ENCODE measurements at regions of chr1 and their contacts with region 1.

Region 1: DNA sequence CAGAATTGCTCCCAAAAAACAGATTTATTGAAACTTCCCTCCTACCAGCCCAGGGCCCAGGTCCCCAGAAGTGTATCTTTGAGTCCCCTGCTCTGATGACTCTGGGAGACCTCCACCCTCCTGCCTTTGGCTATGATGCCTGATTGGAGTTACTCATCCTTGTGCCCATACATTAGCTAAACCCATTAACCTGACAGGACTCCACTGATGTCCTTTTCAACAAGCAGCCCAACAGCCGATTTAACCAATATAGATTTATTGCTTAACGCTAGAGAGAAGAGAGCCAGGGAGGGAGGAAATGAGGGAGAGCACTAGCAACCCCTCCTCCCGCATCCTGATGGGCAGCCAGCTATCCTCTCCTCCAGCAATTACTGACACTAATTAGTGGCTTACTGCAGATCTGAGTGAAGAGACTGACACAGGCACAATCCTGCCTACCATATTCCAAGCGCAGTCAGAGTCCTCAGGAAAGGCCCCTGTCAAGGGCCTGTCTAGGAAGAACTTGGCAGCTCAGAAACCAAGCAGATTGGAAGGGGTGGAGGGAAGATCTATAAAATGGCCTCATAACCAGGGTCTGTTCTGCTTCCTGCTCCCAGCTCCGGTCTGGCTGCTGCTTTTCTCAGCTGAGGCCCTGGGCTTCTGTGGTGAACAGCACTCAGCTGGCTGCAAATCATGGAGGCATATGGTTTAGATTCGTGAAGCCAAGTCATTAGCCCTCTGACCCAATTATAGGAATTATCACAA is 484.5 kb upstream of the DAB1 start:
- DNase-seq: no peak
- H3K4me3 ChIP-seq: no peak overlapping the region
- H3K27ac ChIP-seq: no peak overlapping the region
- H3K4me1 ChIP-seq: no peaks in the 10 kb centered on the region
- H3K27me3 ChIP-seq: no peaks in the 10 kb centered on the region
- CTCF ChIP-seq: no peak
- POLR2A ChIP-seq: no peak

Region 2: GRCh38 chr1:57319165-57319564 is 589.2 kb before region 1 on chr1:
- intact Hi-C with region 1: no loop called
- DNase-seq: no peak
- H3K4me3 ChIP-seq: no peak overlapping the region
- H3K27ac ChIP-seq: no peak overlapping the region
- H3K4me1 ChIP-seq: no peaks in the 10 kb centered on the region
- H3K27me3 ChIP-seq: no peaks in the 10 kb centered on the region
- CTCF ChIP-seq: no peak
- POLR2A ChIP-seq: no peak

Region 3: GRCh38 chr1:57489358-57490036 is 418.8 kb before region 1 on chr1:
- intact Hi-C with region 1: loop called (anchors 10 kb)
- DNase-seq: no peak
- H3K4me3 ChIP-seq: no peak overlapping the region
- H3K27ac ChIP-seq: no peak overlapping the region
- H3K4me1 ChIP-seq: no peaks in the 10 kb centered on the region
- H3K27me3 ChIP-seq: no peaks in the 10 kb centered on the region
- CTCF ChIP-seq: no peak
- POLR2A ChIP-seq: no peak

Region 4: GRCh38 chr1:57727121-57727520 is 181.2 kb before region 1 on chr1:
- intact Hi-C with region 1: no loop called
- DNase-seq: no peak
- H3K4me3 ChIP-seq: no peak overlapping the region
- H3K27ac ChIP-seq: no peak overlapping the region
- H3K4me1 ChIP-seq: no peaks in the 10 kb centered on the region
- H3K27me3 ChIP-seq: no peaks in the 10 kb centered on the region
- CTCF ChIP-seq: no peak
- POLR2A ChIP-seq: no peak

Region 5: DNA sequence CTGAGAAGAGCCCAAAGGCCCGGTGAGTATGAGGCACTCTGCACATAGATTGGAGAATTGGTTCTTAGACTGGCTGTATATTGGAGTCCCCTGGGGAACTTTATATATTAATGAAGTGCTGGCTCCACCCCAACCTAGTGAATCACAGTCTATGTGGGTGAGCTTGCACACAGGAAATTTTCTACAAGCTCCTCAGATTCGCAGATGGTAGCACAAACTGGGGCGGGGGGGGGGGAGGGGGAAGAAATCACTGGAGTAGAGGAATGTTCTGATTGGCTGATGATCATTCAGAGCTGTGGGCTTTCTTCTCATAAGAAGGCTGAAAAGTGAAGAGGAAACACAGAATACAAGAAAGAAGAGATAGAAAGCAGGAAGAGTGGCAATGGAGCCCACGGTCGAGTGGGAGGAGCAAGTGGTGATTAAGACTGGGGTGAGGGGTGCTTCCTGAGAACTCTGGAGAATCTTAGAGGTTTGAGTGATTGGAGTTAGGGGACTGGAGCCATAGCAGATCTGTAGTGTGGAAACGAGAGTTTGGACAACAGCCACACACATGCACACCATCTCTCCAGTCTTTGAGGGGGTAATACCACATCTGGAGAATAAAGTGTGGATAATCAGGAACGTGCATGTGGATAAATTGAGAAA is 18.5 kb before region 1 on chr1:
- intact Hi-C with region 1: no loop called
- DNase-seq: no peak
- H3K4me3 ChIP-seq: no peak overlapping the region
- H3K27ac ChIP-seq: no peak overlapping the region
- H3K4me1 ChIP-seq: no peaks in the 10 kb centered on the region
- H3K27me3 ChIP-seq: no peaks in the 10 kb centered on the region
- CTCF ChIP-seq: no peak
- POLR2A ChIP-seq: no peak